A549 (cell line): ENCODE measurements at regions of chr20 and their contacts with region 1.

Region 1: DNA sequence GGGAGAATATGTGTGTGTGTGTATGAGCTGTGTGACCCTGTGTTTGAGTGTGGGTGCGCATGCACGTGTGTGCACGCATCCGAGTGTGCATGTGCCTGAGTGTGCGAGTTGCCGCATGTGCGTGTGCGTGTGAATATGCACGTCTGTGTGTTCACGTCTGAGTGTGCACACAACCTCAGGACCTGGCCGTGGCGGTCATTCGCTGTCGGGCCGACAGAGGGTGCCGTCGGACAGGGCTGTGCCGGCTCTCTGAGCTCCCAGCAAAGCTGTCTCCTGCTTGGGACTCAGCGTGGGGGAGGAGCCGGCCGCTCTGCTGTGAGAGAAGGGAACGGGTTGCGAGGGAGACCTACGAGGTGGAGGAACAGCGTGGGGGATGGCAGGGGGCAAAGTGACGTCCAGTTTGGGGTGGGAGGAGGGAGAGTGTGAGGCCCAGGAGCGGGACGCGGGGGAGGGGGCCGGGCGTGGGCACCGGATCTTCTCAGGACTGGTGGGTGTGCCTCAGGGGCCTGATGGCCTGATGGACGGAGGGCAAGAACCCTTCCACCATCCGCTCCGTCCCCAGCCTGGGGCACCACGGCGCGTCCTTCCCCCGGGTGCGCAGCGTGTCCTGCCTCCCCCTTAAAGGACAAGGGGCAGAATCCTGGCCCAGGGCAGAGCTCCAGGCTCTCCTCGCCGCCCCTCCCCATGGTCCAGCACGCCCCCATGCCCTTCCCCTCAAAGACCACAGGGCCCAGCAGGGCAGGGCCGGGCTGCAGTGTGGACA is 19.9 kb downstream of the SLC17A9 start:
- DNase-seq: peak; percentile 83 to 96
- ATAC-seq: peak; percentile 88 to 94
- H3K4me3 ChIP-seq: peak overlapping the region; percentile 44
- H3K27ac ChIP-seq: peak overlapping the region; percentile 35 to 72; a peak in 5 of 6 replicates
- H3K4me1 ChIP-seq: 0 out of 3 replicates have a peak, but pooled peaks cover 3% of the 10 kb centered on the region
- CTCF ChIP-seq: peak; percentile 77
- EP300 ChIP-seq: no peak
- POLR2A ChIP-seq: no peak
- RAD21 ChIP-seq: peak; percentile 92 to 95

Region 2: GRCh38 chr20:62776692-62777527 is 195.5 kb before region 1 on chr20:
- CTCF ChIA-PET with region 1: no interaction called
- POLR2A ChIA-PET with region 1: no interaction called
- DNase-seq: peak in 1 of 2 experiments; percentile 61
- ATAC-seq: peak in 1 of 2 experiments; percentile 60; a peak in 3 of 6 replicates
- H3K4me3 ChIP-seq: no peak overlapping the region
- H3K27ac ChIP-seq: peak overlapping the region in 1 of 2 experiments; percentile 49; a peak in 2 of 6 replicates
- H3K4me1 ChIP-seq: no peaks in the 10 kb centered on the region
- CTCF ChIP-seq: no peak
- EP300 ChIP-seq: no peak
- POLR2A ChIP-seq: no peak
- RAD21 ChIP-seq: no peak

Region 3: DNA sequence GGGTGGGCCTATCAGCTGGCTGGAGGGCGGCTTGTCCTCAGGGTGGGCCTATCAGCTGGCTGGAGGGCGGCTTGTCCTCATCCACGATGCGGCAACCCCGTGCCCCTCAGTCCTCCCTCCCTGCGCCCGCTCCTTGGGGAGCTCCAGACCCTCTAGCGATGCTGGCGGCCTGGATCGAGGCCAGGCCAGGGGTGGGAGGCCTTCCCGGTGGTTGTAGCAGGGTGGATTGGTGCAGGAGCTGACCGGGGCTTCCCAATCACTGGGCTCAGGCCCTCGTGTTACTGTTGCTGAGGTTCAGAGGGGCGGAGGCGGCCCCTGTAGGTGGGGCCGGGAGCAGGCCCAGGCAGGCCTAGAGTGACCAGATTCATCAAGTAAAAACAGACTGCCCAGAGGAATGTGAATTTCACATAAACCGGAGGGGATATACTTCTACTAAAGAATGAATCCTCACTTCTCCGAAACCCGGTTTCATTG is 11.1 kb before region 1 on chr20:
- CTCF ChIA-PET with region 1: interaction called, 16 read pairs
- POLR2A ChIA-PET with region 1: no interaction called
- DNase-seq: no peak
- ATAC-seq: no peak
- H3K4me3 ChIP-seq: no peak overlapping the region
- H3K27ac ChIP-seq: no peak overlapping the region
- H3K4me1 ChIP-seq: no peaks in the 10 kb centered on the region
- CTCF ChIP-seq: no peak
- EP300 ChIP-seq: no peak
- POLR2A ChIP-seq: no peak
- RAD21 ChIP-seq: no peak

Region 4: DNA sequence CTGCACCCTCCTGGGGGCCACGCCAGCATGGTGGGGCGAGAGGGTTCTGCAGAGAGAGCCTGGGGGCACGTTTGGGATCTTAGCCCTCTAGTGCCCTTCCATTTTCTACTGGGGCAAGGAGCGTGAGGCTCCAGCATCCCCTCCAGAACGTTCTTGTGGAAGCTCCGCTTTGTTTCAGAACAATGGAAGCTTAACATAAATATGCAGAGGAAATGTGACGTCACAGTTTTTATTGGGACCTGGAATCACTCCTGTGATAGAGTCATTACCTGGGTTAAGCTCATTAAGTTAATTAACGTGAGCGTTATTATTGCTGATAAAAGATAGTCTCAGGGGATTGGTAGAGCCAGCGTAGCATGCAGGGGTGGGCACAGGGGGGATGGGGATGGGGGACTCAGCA is 14.7 kb after region 1 on chr20:
- CTCF ChIA-PET with region 1: interaction called, 16 read pairs
- POLR2A ChIA-PET with region 1: interaction called, 3 read pairs
- DNase-seq: no peak
- ATAC-seq: no peak
- H3K4me3 ChIP-seq: no peak overlapping the region
- H3K27ac ChIP-seq: no peak overlapping the region
- H3K4me1 ChIP-seq: no peaks in the 10 kb centered on the region
- CTCF ChIP-seq: no peak
- EP300 ChIP-seq: no peak
- POLR2A ChIP-seq: no peak
- RAD21 ChIP-seq: no peak

Region 5: DNA sequence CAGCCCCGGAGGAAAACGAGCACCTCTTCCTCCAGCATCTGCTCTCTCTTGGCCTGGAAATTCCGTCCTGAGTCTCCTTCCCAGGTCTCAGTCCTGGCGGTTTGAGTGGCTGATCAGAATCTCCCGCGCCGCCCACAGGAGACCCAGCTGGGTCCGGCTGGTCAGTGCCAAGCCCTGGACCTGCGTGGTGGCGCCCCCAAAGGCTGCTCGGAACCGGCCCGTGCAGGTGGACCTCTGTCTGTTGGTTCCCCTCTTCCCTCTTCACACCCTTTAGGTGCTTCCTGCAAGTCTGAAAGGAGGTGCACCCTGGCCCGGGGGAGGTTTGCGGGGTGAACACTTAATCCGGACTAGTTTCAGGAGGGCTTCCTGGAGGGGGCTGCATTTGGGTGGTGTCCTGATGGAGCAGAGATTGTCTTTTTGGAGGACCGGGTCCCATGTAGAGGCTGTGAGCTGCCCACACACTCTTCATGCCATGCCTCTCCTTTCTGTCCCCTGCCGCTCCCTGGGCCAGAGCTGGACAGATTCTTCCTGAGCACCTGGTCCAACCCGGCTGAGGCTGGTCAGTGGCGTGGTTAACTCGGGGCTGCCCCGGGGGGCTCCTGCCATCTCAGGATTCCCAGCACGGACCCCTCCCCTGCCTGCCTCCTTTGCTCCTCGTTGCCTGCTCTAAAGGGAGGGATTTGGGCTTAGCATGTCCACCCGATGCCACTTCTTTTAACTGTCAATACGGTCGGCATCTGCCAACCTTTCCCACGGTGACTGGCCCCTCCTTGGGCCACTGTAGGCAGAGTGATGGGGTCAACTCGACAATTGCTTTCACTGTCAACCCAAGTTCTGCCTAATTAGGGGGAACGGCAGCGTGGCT is 50.9 kb after region 1 on chr20:
- CTCF ChIA-PET with region 1: interaction called, 13 read pairs
- POLR2A ChIA-PET with region 1: no interaction called
- DNase-seq: no peak
- ATAC-seq: no peak
- H3K4me3 ChIP-seq: no peak overlapping the region
- H3K27ac ChIP-seq: no peak overlapping the region
- H3K4me1 ChIP-seq: 0 out of 3 replicates have a peak, but pooled peaks cover 2% of the 10 kb centered on the region
- CTCF ChIP-seq: no peak
- EP300 ChIP-seq: no peak
- POLR2A ChIP-seq: no peak
- RAD21 ChIP-seq: no peak

Region 6: DNA sequence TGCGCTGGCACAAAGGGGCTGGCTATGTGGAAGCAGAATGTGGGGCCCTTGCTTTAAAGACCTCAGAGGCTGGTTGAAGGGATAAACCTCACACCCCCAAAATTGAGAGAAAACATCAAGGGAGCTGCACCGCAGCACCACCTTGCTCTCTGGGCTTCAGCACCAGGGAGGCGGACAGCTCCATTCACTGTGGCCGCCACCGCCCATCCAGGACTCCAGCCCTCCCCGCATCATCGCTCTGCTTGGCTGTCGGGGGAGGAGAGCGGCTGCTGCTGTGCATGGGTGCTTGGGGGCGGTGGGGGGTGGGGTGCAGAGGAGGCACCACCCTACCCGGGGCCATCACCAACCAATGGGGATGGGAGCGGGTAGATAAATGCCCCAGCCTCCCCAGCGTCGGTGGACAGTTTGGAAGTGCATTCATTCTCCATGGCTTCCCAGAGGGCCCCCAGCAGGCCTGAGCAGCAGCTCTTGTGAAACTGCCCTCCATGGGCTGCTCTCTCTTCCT is 109.9 kb after region 1 on chr20:
- CTCF ChIA-PET with region 1: no interaction called
- POLR2A ChIA-PET with region 1: no interaction called
- DNase-seq: no peak
- ATAC-seq: peak; percentile 49 to 67; a peak in 4 of 6 replicates
- H3K4me3 ChIP-seq: no peak overlapping the region
- H3K27ac ChIP-seq: no peak overlapping the region
- H3K4me1 ChIP-seq: no peaks in the 10 kb centered on the region
- CTCF ChIP-seq: no peak
- EP300 ChIP-seq: no peak
- POLR2A ChIP-seq: no peak
- RAD21 ChIP-seq: no peak